Esophagus muscularis mucosa (tissue), 4 donors: ENCODE measurements at regions of chr13 and their contacts with region 1.

Region 1: GRCh38 chr13:20773194-20774080 is at the start of gene EEF1AKMT1:
- DNase-seq: peak; percentile 95
- H3K4me3 ChIP-seq: peak within 1 kb of the TSS; percentile 61 to 81 (median 68)
- H3K27ac ChIP-seq: peak within 1 kb of the TSS; percentile 88 to 95 (median 92)
- H3K4me1 ChIP-seq: peaks cover 8 to 15% (median 14%) of the 10 kb centered on the region in 4 donors
- H3K27me3 ChIP-seq: no peaks in the 10 kb centered on the region
- CTCF ChIP-seq: peak in 2 of 3 experiments; percentile 3 to 19
- EP300 ChIP-seq: peak; percentile 3
- POLR2A ChIP-seq: peak; percentile 78
- total RNA-seq, gene EEF1AKMT1: 13.1 to 18.7 (median 14.8) TPM

Region 2: DNA sequence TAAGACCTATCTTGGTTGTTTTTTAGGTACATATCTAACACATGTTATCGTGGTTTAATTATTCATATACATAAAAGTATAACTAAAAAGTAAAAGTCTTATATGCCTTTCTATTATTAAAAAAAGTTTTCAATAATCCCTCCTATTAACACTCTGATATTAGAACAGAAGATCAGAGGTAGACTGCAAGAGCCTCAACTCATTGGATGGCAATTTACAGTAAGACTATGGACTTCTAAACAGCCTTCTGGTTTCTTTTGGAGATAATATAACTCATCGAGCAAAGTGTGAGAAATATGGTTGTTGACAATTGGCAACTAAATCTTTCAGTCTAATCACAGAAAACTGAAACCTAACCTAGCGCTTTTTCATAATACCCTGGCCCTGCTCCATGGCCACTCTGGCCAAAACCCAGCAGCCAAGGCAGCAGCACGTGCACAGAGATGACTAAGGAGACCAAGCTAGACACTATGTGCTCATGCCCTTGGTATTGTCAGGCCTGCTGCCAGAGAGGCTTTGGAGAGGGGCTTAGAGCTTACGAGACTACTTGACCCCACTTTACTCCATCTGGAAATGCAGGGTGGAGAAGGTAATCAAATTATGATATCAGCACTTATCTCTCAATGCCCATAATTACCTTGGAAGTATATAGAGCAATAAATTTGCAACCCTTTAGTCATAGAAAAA is 40.9 kb after region 1 on chr13:
- intact Hi-C with region 1: loop called (anchors 5 kb)
- DNase-seq: peak; percentile 96
- H3K4me3 ChIP-seq: peak overlapping the region in 1 of 4 donors; percentile 25
- H3K27ac ChIP-seq: peak overlapping the region; percentile 78 to 85 (median 82)
- H3K4me1 ChIP-seq: peaks cover 29 to 64% (median 57%) of the 10 kb centered on the region in 4 donors
- H3K27me3 ChIP-seq: no peaks in the 10 kb centered on the region
- CTCF ChIP-seq: no peak
- EP300 ChIP-seq: no peak
- POLR2A ChIP-seq: no peak

Region 3: GRCh38 chr13:20828539-20829364 is 55.3 kb after region 1 on chr13:
- intact Hi-C with region 1: loop called (anchors 2 kb)
- DNase-seq: no peak
- H3K4me3 ChIP-seq: peak overlapping the region; percentile 16 to 45 (median 36)
- H3K27ac ChIP-seq: peak overlapping the region; percentile 21 to 57 (median 46)
- H3K4me1 ChIP-seq: peaks cover 5 to 85% (median 77%) of the 10 kb centered on the region in 4 donors
- H3K27me3 ChIP-seq: no peaks in the 10 kb centered on the region
- CTCF ChIP-seq: peak; percentile 79 to 88 (median 86)
- EP300 ChIP-seq: no peak
- POLR2A ChIP-seq: no peak

Region 4: GRCh38 chr13:21541980-21542379 is 768.5 kb after region 1 on chr13:
- intact Hi-C with region 1: no loop called
- DNase-seq: no peak
- H3K4me3 ChIP-seq: no peak overlapping the region
- H3K27ac ChIP-seq: no peak overlapping the region
- H3K4me1 ChIP-seq: no peaks in the 10 kb centered on the region
- H3K27me3 ChIP-seq: no peaks in the 10 kb centered on the region
- CTCF ChIP-seq: no peak
- EP300 ChIP-seq: no peak
- POLR2A ChIP-seq: no peak